Activated CD4-positive, alpha-beta T cell treated with anti-CD3 and anti-CD28 coated beads, Interleukin-2, amount 10 ng/mL, durations not matched to agents 24 days and 14 days (primary cell): ENCODE measurements at regions of chr7 and their contacts with region 1.

Region 1: GRCh38 chr7:48109848-48110663 is 21.0 kb downstream of the UPP1 start:
- DNase-seq: peak; percentile 96
- H3K4me3 Mint-ChIP-seq: no peak overlapping the region
- H3K27ac Mint-ChIP-seq: peak overlapping the region; percentile 35
- H3K4me1 Mint-ChIP-seq: peaks cover 11% of the 10 kb centered on the region
- H3K27me3 Mint-ChIP-seq: no peaks in the 10 kb centered on the region

Region 2: GRCh38 chr7:47945261-47946001 is 164.6 kb before region 1 on chr7:
- intact Hi-C with region 1: loop called (anchors 1 kb)
- DNase-seq: peak; percentile 91
- H3K4me3 Mint-ChIP-seq: no peak overlapping the region
- H3K27ac Mint-ChIP-seq: no peak overlapping the region
- H3K4me1 Mint-ChIP-seq: peaks cover 2% of the 10 kb centered on the region
- H3K27me3 Mint-ChIP-seq: no peaks in the 10 kb centered on the region

Region 3: GRCh38 chr7:47991741-47992311 is 118.2 kb before region 1 on chr7:
- intact Hi-C with region 1: loop called (anchors 1 kb)
- DNase-seq: peak; percentile 95
- H3K4me3 Mint-ChIP-seq: peak overlapping the region; percentile 88
- H3K27ac Mint-ChIP-seq: peak overlapping the region; percentile 86
- H3K4me1 Mint-ChIP-seq: peaks cover 18% of the 10 kb centered on the region
- H3K27me3 Mint-ChIP-seq: no peaks in the 10 kb centered on the region

Region 4: DNA sequence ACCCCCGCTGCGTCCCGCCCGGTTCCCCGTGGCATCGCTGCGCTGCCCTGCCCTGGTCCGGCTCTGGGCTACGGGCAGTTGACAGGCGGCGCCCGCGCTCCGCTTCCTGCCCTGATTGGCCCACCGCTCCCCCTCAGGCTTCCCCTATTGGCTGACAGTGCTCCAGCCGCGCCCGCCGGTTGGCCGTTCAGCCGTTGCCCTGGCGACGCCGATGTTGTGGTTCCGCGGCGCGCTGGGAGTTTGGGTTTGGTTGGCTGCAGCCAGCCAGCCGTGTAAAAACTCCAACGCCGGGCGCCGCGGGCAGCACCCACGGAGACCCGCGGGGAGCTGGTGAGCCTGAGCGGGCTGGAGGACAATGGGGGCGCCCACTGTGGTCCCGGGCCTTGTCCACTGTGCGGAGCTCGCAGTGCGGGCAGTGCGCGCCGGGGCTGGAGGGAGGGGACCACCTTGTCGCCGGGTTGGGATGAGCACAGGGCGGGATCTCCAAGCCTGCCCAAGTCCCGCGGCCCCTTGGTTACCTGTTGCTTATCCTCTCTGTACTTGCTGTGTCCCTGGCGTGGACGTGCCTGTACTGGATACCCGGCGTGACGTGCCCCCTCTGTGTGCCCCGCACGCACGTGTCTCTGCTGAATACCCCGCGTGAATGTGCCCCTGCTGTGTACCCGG is 74.6 kb before region 1 on chr7 and contains the start of gene C7orf57:
- intact Hi-C with region 1: loop called (anchors 1 kb)
- DNase-seq: peak; percentile 97
- H3K4me3 Mint-ChIP-seq: peak within 1 kb of the TSS; percentile 84
- H3K27ac Mint-ChIP-seq: peak within 1 kb of the TSS; percentile 74
- H3K4me1 Mint-ChIP-seq: peaks cover 11% of the 10 kb centered on the region
- H3K27me3 Mint-ChIP-seq: peaks cover 64% of the 10 kb centered on the region
- total RNA-seq, gene C7orf57: 0.14 TPM in 2 replicates

Region 5: DNA sequence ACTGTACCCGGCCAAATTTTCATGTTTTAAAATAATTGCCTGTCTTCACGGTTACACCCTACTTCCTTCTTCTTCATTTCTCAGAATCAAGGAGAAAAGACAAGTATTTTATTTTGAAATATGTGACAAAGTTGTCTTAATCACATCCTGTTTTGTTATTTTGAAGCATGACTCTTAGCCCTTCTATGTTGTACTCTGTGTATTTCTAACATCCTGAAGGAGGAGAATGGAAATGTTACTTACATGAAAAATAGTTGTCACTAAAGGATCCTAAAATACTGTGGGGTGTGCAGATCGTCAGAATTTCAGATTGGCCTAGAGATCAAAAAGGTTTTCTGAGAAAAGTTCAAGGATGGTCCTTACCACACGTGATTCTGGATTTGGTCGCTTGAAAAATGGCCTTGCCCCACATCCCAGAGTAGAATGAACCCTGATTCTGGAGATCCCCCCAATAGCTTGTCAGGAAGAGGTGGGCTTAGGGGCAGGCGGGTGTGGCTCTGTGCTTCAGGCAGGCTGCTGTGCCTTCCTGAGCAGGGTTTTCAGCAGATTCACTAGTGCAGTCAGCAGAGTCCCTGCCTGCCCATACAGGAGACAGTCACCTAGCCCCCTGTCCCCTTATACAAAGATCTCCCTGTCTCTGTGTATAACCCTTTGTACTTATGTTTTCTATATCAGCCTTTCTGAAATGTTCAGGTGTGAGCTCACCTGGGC is 12.4 kb before region 1 on chr7:
- intact Hi-C with region 1: loop called (anchors 1 kb)
- DNase-seq: peak; percentile 83
- H3K4me3 Mint-ChIP-seq: peak overlapping the region; percentile 76
- H3K27ac Mint-ChIP-seq: peak overlapping the region; percentile 83
- H3K4me1 Mint-ChIP-seq: peaks cover 70% of the 10 kb centered on the region
- H3K27me3 Mint-ChIP-seq: no peaks in the 10 kb centered on the region